Dendritic cell treated with granulocyte-macrophage colony-stimulating factor and Interleukin-4, amounts not matched to agents 40 ng/mL and 50 ng/mL, for 4 days (primary cell): ENCODE measurements at regions of chr20 and their contacts with region 1.

Region 1: GRCh38 chr20:47767972-47768794 is 17.1 kb downstream of the SULF2 start:
- H3K4me3 Mint-ChIP-seq: peak overlapping the region; percentile 47
- H3K27ac Mint-ChIP-seq: peak overlapping the region; percentile 92
- H3K4me1 Mint-ChIP-seq: peaks cover 97% of the 10 kb centered on the region
- H3K27me3 Mint-ChIP-seq: no peaks in the 10 kb centered on the region

Region 2: GRCh38 chr20:47740862-47741184 is 27.4 kb before region 1 on chr20:
- intact Hi-C with region 1: loop called (anchors 1 kb)
- H3K4me3 Mint-ChIP-seq: peak overlapping the region; percentile 50
- H3K27ac Mint-ChIP-seq: peak overlapping the region; percentile 91
- H3K4me1 Mint-ChIP-seq: peaks cover 81% of the 10 kb centered on the region
- H3K27me3 Mint-ChIP-seq: no peaks in the 10 kb centered on the region

Region 3: GRCh38 chr20:47785854-47786764 is 17.9 kb after region 1 on chr20:
- intact Hi-C with region 1: loop called (anchors 2 kb)
- H3K4me3 Mint-ChIP-seq: peak overlapping the region; percentile 99
- H3K27ac Mint-ChIP-seq: peak overlapping the region; percentile 86
- H3K4me1 Mint-ChIP-seq: peaks cover 45% of the 10 kb centered on the region
- H3K27me3 Mint-ChIP-seq: peaks cover 27% of the 10 kb centered on the region